CD4-positive, alpha-beta memory T cell (primary cell): ENCODE measurements at regions of chr10 and their contacts with region 1.

Region 1: GRCh38 chr10:124418726-124419501 is at the start of gene OAT:
- DNase-seq: peak; percentile 94 to 95 (median 95)
- H3K4me3 ChIP-seq: peak within 1 kb of the TSS; percentile 52 to 66
- H3K4me3 Mint-ChIP-seq: peak within 1 kb of the TSS; percentile 84 to 95 (median 87)
- H3K27ac ChIP-seq: peak within 1 kb of the TSS; percentile 70
- H3K27ac Mint-ChIP-seq: peak within 1 kb of the TSS; percentile 74 to 91 (median 84)
- H3K4me1 ChIP-seq: peaks cover 13% of the 10 kb centered on the region
- H3K4me1 Mint-ChIP-seq: peaks cover 4 to 36% (median 20%) of the 10 kb centered on the region in 4 donors
- H3K27me3 ChIP-seq: no peaks in the 10 kb centered on the region
- H3K27me3 Mint-ChIP-seq: peaks cover 4 to 8% of the 10 kb centered on the region in 2 donors
- total RNA-seq, gene OAT: 34.8 to 39.3 TPM

Region 2: GRCh38 chr10:124378881-124379471 is 39.9 kb before region 1 on chr10:
- CTCF ChIA-PET with region 1: no interaction called
- POLR2A ChIA-PET with region 1: no interaction called
- intact Hi-C with region 1: no loop called
- DNase-seq: no peak
- H3K4me3 ChIP-seq: no peak overlapping the region
- H3K4me3 Mint-ChIP-seq: no peak overlapping the region
- H3K27ac ChIP-seq: no peak overlapping the region
- H3K27ac Mint-ChIP-seq: no peak overlapping the region
- H3K4me1 ChIP-seq: no peaks in the 10 kb centered on the region
- H3K4me1 Mint-ChIP-seq: peaks cover 0 to 2% (median 0%) of the 10 kb centered on the region in 4 donors
- H3K27me3 ChIP-seq: peaks cover 26% of the 10 kb centered on the region
- H3K27me3 Mint-ChIP-seq: peaks cover 35 to 42% of the 10 kb centered on the region in 2 donors

Region 3: DNA sequence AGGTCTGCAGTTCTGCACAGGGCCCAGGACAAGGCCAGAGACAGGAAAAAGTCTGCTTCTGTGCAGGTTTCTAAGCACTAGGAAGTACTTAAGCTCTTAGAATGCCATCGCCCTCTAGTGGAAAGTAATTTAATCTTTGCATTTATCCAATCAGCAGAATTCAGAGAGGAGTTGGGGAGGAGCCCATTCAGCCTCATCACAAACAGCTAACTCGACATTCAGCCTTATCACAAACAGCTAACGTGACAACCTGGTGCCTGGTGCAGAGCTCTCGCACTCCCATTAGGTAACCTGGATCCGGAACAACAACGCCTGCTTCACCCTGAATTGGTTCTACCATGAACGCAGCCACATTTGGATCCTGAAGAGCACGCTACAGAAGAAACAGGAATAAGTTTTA is 15.4 kb before region 1 on chr10:
- CTCF ChIA-PET with region 1: interaction called, 14 read pairs
- POLR2A ChIA-PET with region 1: interaction called, 12 read pairs
- intact Hi-C with region 1: no loop called
- DNase-seq: peak; percentile 54 to 75 (median 68)
- H3K4me3 ChIP-seq: no peak overlapping the region
- H3K4me3 Mint-ChIP-seq: peak overlapping the region in 1 of 8 donors; percentile 45
- H3K27ac ChIP-seq: no peak overlapping the region
- H3K27ac Mint-ChIP-seq: peak overlapping the region; percentile 39 to 90 (median 85)
- H3K4me1 ChIP-seq: peaks cover 7% of the 10 kb centered on the region
- H3K4me1 Mint-ChIP-seq: peaks cover 8 to 11% (median 9%) of the 10 kb centered on the region in 4 donors
- H3K27me3 ChIP-seq: no peaks in the 10 kb centered on the region
- H3K27me3 Mint-ChIP-seq: no peaks in the 10 kb centered on the region

Region 4: GRCh38 chr10:124461438-124462347 is 42.8 kb after region 1 on chr10 and contains the start of gene LHPP:
- CTCF ChIA-PET with region 1: interaction called, 3 read pairs
- POLR2A ChIA-PET with region 1: interaction called, 24 read pairs
- intact Hi-C with region 1: loop called (anchors 1 kb)
- DNase-seq: peak; percentile 85 to 90 (median 86)
- H3K4me3 ChIP-seq: peak within 1 kb of the TSS; percentile 42 to 76
- H3K4me3 Mint-ChIP-seq: peak within 1 kb of the TSS; percentile 88 to 96 (median 92)
- H3K27ac ChIP-seq: peak within 1 kb of the TSS; percentile 59
- H3K27ac Mint-ChIP-seq: peak within 1 kb of the TSS; percentile 80 to 98 (median 97)
- H3K4me1 ChIP-seq: peaks cover 27% of the 10 kb centered on the region
- H3K4me1 Mint-ChIP-seq: peaks cover 21 to 36% (median 29%) of the 10 kb centered on the region in 4 donors
- H3K27me3 ChIP-seq: no peaks in the 10 kb centered on the region
- H3K27me3 Mint-ChIP-seq: peaks cover 4 to 5% of the 10 kb centered on the region in 2 donors
- total RNA-seq, gene LHPP: 17.9 to 18.3 TPM